ENCODE measurements at regions of chr13 and their contacts with region 1.

Region 1: GRCh38 chr13:44435142-44435982 is 61.7 kb downstream of the SERP2 start:
- DNase-seq: peak; percentile 94 to 97 (median 96)
- ATAC-seq: peak; percentile 67 to 85 (median 80)
- H3K4me3 ChIP-seq: peak overlapping the region; percentile 60 to 87 (median 80)
- H3K27ac ChIP-seq: peak overlapping the region; percentile 91 to 99 (median 96)
- H3K4me1 ChIP-seq: peaks cover 0 to 53% (median 29%) of the 10 kb centered on the region in 12 donors
- H3K27me3 ChIP-seq: no peaks in the 10 kb centered on the region
- CTCF ChIP-seq: peak in 1 of 12 donors; percentile 8
- POLR2A ChIP-seq: peak; percentile 90 to 92

Region 2: DNA sequence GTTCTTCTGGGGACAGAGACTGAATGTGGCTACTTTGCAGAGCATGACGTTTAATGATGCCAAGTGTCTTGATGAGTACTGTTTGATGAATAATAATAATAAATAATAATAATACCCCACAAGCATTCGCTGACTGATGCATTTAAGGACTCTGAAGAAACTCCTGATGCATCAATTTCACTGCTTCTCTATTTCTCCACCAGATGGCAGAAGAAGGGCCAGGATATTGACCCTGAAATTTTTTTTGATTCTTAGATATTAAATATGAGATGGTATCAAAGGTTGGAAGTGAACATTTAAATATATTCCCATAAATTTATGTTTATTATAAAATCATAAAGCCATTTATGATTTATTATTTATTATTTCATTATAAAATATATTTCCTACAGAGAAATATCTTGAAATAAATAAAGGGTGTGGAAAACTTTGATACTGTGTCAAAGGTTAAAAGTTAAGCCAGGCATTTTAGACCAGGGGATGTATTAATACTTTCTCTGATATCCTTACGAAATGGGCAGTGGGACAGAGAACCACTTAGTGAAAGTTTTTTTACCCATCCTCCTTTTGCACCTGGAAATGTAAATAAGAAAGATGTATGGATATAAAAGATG is 384.8 kb before region 1 on chr13:
- intact Hi-C with region 1: loop called (anchors 1 to 5 kb)
- DNase-seq: no peak
- ATAC-seq: peak in 1 of 4 donors; percentile 55
- H3K4me3 ChIP-seq: no peak overlapping the region
- H3K27ac ChIP-seq: no peak overlapping the region
- H3K4me1 ChIP-seq: peaks cover 0 to 17% (median 0%) of the 10 kb centered on the region in 12 donors
- H3K27me3 ChIP-seq: peaks cover 0 to 2% (median 0%) of the 10 kb centered on the region in 9 donors
- CTCF ChIP-seq: peak; percentile 74 to 95 (median 85)
- POLR2A ChIP-seq: no peak

Region 3: GRCh38 chr13:44191504-44192171 is 243.7 kb before region 1 on chr13:
- intact Hi-C with region 1: loop called in 9 of 10 experiments (anchors 1 to 5 kb)
- DNase-seq: peak in 4 of 5 donors; percentile 38 to 62 (median 58)
- ATAC-seq: peak; percentile 89 to 94 (median 94)
- H3K4me3 ChIP-seq: peak overlapping the region in 5 of 12 donors; percentile 9 to 28 (median 10)
- H3K27ac ChIP-seq: peak overlapping the region in 7 of 12 donors; percentile 13 to 62 (median 32)
- H3K4me1 ChIP-seq: peaks cover 0 to 7% (median 0%) of the 10 kb centered on the region in 12 donors
- H3K27me3 ChIP-seq: no peaks in the 10 kb centered on the region
- CTCF ChIP-seq: peak; percentile 57 to 85 (median 75)
- POLR2A ChIP-seq: no peak

Region 4: GRCh38 chr13:44293908-44294735 is 141.2 kb before region 1 on chr13:
- intact Hi-C with region 1: loop called in 1 of 10 experiments (anchors 10 kb)
- DNase-seq: no peak
- ATAC-seq: peak; percentile 35 to 73 (median 56)
- H3K4me3 ChIP-seq: no peak overlapping the region
- H3K27ac ChIP-seq: peak overlapping the region in 10 of 12 donors; percentile 9 to 74 (median 26)
- H3K4me1 ChIP-seq: peaks cover 0 to 39% (median 22%) of the 10 kb centered on the region in 12 donors
- H3K27me3 ChIP-seq: no peaks in the 10 kb centered on the region
- CTCF ChIP-seq: no peak
- POLR2A ChIP-seq: no peak

Region 5: DNA sequence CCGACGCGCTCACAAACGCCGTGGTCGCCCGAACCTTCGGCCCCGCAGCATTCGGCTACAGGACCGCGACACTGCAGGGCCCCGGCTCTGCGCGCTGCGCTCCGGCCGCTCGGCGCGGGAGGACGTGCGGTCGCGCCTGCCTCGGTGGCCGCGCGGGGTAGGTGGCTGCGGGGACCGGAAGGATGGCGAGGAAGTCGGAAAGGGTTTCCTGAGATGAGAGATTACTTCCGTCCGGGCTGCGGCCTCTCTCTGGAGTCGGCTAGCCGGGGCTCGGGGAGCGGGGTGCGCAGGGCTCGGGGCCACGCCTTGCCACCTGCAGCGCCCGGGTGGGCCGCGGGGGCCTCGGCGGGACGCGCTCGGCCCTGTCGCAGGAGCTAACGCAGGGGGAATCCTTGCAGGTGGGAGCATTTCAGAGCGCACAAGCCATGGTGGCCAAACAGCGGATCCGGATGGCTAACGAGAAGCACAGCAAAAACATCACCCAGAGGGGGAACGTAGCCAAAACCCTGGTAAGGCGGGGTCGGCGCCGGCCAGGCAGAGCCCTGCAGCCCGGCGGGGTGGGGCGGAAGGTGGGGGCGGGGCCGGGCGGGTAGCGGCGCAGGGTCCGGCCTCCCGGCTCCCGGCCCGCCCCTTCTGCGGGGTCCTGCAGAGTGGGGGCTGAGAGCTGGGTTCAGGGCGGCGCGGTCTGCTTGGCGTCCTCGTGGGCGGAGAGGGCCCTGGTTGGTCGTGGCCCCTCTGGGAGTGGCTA is 61.6 kb before region 1 on chr13 and contains the start of gene SERP2:
- intact Hi-C with region 1: loop called in 1 of 10 experiments (anchors 5 kb)
- DNase-seq: peak; percentile 36 to 70 (median 53)
- ATAC-seq: peak; percentile 43 to 84 (median 80)
- H3K4me3 ChIP-seq: peak within 1 kb of the TSS; percentile 37 to 95 (median 68)
- H3K27ac ChIP-seq: peak within 1 kb of the TSS; percentile 2 to 80 (median 50)
- H3K4me1 ChIP-seq: peaks cover 0 to 21% (median 7%) of the 10 kb centered on the region in 12 donors
- H3K27me3 ChIP-seq: peaks cover 0 to 18% (median 0%) of the 10 kb centered on the region in 9 donors
- CTCF ChIP-seq: peak in 1 of 12 donors; percentile 4
- POLR2A ChIP-seq: no peak
- total RNA-seq, gene SERP2: 9.6 to 16.5 (median 12.8) TPM

Region 6: DNA sequence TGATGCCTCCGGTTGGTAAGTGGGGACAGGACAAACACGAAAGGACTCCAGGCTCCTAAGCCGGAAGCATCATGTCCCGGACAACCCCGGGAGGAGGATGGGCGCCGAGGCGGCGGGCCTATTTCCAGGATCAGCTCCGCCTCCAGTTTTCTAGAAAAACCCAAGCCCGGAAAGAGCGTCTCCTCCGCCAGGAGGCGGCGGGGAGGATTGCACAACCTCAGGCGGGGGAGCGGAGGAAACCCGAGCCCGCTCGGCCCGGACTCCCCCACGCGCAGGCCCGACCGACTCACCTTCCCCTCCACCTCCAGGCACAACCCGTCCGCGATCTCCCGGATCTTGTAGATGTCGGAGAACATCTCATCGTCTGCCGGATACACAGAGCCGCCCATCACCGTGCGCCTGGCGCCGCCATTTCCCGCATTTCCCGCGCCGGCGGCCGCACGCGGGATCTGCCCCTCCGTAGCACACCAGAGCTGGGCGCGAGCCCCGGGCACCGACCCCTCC is 905.1 kb after region 1 on chr13:
- intact Hi-C with region 1: no loop called
- DNase-seq: peak; percentile 93 to 96 (median 94)
- ATAC-seq: peak; percentile 49 to 76 (median 70)
- H3K4me3 ChIP-seq: peak overlapping the region; percentile 71 to 100 (median 94)
- H3K27ac ChIP-seq: peak overlapping the region; percentile 99 to 100 (median 100)
- H3K4me1 ChIP-seq: peaks cover 16 to 57% (median 49%) of the 10 kb centered on the region in 12 donors
- H3K27me3 ChIP-seq: no peaks in the 10 kb centered on the region
- CTCF ChIP-seq: peak; percentile 27 to 77 (median 58)
- POLR2A ChIP-seq: peak in 1 of 2 donors; percentile 6